ENCODE measurements at regions of chr10 and their contacts with region 1.

Region 1: DNA sequence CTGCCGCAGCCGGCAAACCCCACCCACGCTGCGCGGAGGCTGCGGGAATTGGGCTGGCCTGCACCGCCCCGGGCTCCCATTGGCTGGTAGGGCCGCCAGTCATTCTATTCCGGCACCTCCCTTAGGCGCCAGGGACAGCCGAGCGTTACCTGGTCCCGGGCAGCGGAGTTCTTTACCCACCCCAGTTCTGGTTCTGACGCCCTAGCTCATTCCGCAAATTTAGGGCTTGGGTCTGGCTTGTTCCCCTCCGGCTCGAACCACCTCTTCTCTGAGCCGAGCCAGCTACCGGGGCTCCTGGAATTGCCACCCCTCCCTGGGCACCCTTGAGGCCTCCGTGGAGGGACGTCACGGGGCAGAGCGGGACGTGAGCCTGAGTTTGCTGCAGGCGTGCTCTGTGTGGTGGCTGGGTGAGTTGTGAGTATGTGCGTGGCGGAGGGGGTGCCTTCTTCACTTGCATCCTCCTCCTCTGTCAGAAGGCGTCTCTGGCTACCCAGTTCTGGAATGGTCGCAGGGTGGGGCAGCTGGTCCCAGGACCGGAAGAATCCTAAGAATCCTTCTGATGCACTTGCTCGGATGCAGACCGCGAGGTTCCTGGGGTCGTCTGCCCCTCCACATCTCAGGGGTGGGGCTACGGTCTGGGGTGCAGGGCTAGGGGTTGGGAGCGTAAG is at the starts of genes PDZD7 and SFXN3:
- DNase-seq: peak; percentile 97
- H3K4me3 ChIP-seq: peak within 1 kb of the TSS; percentile 84 to 98
- H3K27ac ChIP-seq: peak within 1 kb of the TSS; percentile 98 to 99
- H3K4me1 ChIP-seq: peaks cover 7 to 43% of the 10 kb centered on the region in 2 experiments; a peak in 2 of 4 replicates
- H3K27me3 ChIP-seq: no peaks in the 10 kb centered on the region
- CTCF ChIP-seq: no peak
- EP300 ChIP-seq: no peak
- RAD21 ChIP-seq: no peak
- polyA plus RNA-seq, gene PDZD7: 1.9 and 2.3 TPM in 2 replicates
- polyA plus RNA-seq, gene SFXN3: 142 and 229 TPM in 2 replicates

Region 2: DNA sequence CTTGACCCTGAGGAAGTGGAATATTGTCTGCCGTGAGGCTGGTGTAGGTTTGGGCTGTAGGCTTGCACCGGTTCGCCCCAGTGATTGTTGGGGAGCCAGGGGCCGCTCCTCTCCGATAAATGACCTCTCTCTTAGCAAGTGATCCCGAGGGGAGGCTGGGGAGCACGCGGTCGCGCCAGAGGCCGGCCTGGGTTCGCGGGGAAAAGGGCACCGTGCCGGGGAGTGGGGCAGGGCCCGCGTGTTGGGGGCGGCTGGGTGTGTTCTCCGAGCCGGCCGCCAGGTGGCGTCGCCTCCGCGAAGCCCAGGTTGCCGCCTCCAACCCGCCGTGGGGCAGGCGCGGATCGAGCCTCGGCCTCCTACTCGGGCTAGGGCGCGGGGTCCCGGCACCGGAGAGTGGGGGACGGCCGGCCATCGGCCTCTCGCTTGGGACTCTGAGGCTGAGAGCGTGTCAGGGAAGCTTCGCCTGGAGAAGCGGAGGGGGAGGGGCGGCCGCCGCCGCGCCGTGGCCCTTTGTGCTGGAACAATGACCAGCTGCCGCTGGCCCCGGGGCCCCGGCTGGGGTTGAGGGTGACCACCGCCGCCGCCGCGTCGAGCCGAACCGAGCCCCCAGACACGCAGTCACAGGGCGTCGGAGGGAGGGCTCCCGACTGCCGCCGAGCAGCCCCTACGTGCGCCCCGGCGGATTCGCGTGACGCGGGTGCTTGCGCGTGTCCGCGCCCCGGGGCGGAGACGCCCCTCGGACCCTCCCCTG is 32.1 kb before region 1 on chr10:
- CTCF ChIA-PET with region 1: interaction called, 95 read pairs
- POLR2A ChIA-PET with region 1: interaction called, 4 read pairs
- DNase-seq: peak; percentile 93
- H3K4me3 ChIP-seq: peak overlapping the region; percentile 66 to 90
- H3K27ac ChIP-seq: peak overlapping the region; percentile 98 to 99
- H3K4me1 ChIP-seq: peaks cover 20 to 37% of the 10 kb centered on the region in 2 experiments; a peak in 3 of 4 replicates
- H3K27me3 ChIP-seq: no peaks in the 10 kb centered on the region
- CTCF ChIP-seq: peak; percentile 77
- EP300 ChIP-seq: no peak; a peak in 1 of 4 replicates
- RAD21 ChIP-seq: peak; percentile 52

Region 3: DNA sequence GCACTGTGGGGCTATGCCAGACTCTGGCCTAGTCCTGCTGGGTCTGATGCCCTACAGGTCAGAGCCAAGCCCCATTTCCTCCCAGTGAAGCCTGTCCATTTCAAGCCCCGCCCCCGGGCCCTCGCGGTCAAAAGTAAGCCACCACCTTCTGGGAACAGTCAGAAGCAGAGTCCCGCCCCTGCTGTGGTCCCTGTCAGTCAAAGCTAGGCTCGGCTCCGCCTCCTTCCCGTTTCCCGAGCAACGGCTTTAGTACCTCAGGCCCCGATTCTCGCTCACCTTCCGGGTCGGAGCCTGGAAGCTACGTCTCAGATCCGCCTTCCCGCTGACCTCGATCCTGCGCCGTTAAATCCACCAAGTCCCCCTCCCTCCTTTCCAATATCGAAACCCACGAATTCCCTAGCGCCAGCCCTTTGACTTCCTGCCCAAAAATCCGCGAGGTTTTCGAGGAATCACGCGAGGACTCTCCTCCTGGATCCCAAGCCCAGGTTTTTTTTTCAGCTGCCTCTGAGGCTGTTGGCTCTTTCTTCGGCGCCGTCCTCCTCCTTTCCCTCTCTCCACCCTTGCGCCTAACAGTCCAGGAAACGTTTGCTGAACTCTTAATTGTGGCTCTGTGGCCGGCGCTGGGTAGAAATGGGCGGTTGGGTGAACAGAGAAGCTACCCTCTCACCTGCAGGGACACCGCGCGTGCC is 11.5 kb after region 1 on chr10:
- CTCF ChIA-PET with region 1: interaction called, 75 read pairs
- POLR2A ChIA-PET with region 1: interaction called, 16 read pairs
- DNase-seq: peak; percentile 91
- H3K4me3 ChIP-seq: peak overlapping the region; percentile 53 to 68
- H3K27ac ChIP-seq: peak overlapping the region; percentile 91 to 97
- H3K4me1 ChIP-seq: peaks cover 10 to 18% of the 10 kb centered on the region in 2 experiments
- H3K27me3 ChIP-seq: no peaks in the 10 kb centered on the region
- CTCF ChIP-seq: no peak
- EP300 ChIP-seq: no peak
- RAD21 ChIP-seq: no peak

Region 4: DNA sequence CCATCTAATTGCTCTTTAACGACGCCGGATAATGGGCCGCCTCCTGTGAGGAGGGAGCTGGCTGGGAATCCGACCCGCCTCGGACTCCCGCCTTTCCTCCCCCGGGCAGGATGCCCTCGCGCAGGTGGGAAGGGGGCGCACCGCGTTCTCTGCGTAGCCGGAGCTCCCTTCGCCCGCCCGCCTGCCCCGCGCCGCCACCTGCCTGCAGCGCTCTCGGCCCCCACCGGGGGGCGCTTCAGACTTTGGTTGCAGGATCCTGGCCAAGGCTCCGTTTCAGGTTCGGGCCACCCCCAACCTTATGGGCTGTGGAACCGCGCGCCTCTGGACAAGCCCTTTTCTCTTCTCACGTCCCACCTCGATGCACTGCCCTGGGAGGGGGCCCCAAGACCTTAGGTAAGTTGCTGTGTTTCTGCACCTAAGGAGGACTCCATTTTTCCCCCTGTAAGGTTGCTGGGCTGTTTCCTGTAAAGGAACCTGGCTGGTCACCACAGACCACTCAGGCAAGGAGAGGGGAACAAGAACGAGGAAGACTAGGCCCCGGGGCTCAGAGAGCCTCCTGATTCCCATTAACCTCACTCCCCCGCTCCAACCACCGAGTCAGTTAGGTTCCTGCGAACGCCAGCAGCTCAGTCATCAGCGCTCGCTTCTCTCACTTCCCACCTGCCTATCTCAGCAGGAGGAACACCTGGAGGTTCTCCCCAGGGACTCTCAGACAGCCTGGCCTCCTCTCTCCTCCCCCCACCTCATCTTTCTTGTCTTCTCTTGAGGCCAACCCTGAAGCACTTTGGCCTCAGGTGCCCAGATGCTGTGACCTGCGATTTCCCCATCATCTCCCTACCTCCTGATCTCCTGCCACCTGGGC is 19.2 kb after region 1 on chr10:
- CTCF ChIA-PET with region 1: interaction called, 17 read pairs
- POLR2A ChIA-PET with region 1: no interaction called
- DNase-seq: peak; percentile 87
- H3K4me3 ChIP-seq: peak overlapping the region; percentile 32 to 33; a peak in 3 of 4 replicates
- H3K27ac ChIP-seq: no peak overlapping the region
- H3K4me1 ChIP-seq: peaks cover 4 to 5% of the 10 kb centered on the region in 2 experiments; a peak in 1 of 4 replicates
- H3K27me3 ChIP-seq: no peaks in the 10 kb centered on the region
- CTCF ChIP-seq: peak; percentile 75
- EP300 ChIP-seq: no peak
- RAD21 ChIP-seq: peak; percentile 42

Region 5: DNA sequence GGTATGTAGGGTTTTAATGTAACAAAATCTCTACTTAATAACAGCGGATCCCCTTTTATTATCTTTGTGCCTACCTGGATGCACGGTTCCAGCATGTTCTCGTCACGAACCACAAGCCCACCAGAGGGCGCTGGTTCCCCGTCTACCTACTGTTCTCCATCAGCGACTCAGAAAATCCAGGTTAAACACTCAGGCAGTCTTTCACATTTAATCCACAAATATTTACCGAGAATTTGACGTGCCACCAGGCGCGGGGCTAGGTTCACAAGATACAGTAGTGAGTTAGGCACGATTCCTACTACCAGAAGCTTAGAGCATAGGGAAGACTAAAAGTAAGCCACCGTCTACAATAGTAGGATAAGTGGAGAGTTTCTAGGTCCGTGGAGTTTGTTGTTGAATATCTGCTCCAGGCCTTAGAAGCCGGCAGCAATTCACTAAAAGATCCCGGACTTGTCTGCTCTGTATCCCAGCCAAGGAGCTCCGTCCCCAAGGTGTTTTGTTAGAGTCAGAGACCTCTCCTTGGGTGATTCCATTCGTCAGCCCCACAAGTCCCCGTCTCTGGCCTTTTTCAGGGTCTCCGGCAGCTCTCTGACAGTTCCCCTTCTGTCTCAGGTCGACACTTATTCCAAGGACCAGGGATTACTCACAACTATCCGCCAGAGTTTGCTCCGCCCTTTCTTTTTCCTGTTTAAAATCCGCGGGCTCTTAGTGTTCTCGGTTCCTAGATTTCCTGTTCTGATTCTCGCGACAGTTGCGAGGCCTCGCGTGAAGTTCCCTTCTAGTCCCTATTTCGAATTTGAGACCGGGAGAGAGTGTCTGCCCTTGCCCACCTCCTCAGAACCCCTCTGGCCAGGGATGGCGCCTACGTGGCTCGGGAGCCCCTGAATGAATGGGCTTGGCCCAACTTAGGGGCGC is 29.0 kb after region 1 on chr10:
- CTCF ChIA-PET with region 1: interaction called, 12 read pairs
- POLR2A ChIA-PET with region 1: no interaction called
- DNase-seq: peak; percentile 73
- H3K4me3 ChIP-seq: peak overlapping the region; percentile 83 to 100
- H3K27ac ChIP-seq: peak overlapping the region; percentile 97 to 98
- H3K4me1 ChIP-seq: peaks cover 19 to 23% of the 10 kb centered on the region in 2 experiments; a peak in 3 of 4 replicates
- H3K27me3 ChIP-seq: no peaks in the 10 kb centered on the region
- CTCF ChIP-seq: peak; percentile 96
- EP300 ChIP-seq: no peak
- RAD21 ChIP-seq: peak; percentile 85

Region 6: DNA sequence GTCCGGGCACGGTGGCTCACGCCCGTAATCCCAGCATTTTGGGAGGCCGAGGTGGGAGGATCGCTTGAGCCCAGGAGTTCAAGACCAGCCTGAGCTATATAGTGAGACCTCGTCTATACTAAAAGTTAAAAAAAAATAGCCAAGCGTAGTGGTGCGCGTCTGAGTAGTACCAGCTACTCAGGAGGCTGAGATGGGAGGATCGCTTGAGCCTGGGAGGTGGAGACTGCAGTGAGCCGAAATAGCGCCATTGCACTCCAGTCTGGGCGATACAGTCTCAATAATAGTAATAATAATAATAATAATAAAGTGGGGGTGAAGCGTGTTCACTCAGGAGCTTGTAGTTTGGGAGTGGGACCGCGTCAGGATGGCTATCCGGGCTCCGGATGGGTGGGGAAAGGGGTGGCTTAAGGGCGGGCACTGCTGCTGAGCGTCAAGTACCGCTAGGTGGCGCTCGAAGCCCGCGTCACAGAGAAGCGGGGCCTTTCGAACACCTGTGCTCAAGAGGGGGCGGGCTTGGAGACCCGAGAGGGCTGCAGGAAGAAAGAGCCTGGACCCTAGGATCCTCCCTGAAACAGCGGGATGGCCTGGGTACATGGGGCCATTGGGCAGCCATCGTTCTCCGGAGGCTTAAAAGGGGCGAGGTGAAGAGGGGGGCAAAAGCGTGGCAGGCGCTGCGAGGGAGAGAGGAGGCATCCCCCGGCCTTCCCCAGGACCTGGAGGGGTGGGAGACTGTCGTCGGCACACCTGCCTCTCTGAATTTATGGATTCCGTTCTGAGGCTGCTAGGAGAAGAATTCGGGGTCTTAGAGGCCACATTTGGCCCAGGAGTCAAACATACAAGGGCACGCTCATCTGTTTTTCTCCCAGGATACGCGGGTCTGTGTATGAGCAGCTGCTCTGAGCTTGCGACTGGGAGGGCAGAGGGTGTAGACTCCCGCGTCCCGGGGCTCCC is 183.5 kb after region 1 on chr10:
- CTCF ChIA-PET with region 1: no interaction called
- POLR2A ChIA-PET with region 1: no interaction called
- DNase-seq: peak; percentile 84
- H3K4me3 ChIP-seq: peak overlapping the region; percentile 19 to 67; a peak in 3 of 4 replicates
- H3K27ac ChIP-seq: no peak overlapping the region
- H3K4me1 ChIP-seq: peaks cover 0 to 35% of the 10 kb centered on the region in 2 experiments; a peak in 2 of 4 replicates
- H3K27me3 ChIP-seq: peaks cover 86% of the 10 kb centered on the region
- CTCF ChIP-seq: peak; percentile 93
- EP300 ChIP-seq: no peak
- RAD21 ChIP-seq: peak; percentile 77

Measured in SK-N-SH (cell line).